ENCODE measurements at regions of chr4 and their contacts with region 1.

Region 1: DNA sequence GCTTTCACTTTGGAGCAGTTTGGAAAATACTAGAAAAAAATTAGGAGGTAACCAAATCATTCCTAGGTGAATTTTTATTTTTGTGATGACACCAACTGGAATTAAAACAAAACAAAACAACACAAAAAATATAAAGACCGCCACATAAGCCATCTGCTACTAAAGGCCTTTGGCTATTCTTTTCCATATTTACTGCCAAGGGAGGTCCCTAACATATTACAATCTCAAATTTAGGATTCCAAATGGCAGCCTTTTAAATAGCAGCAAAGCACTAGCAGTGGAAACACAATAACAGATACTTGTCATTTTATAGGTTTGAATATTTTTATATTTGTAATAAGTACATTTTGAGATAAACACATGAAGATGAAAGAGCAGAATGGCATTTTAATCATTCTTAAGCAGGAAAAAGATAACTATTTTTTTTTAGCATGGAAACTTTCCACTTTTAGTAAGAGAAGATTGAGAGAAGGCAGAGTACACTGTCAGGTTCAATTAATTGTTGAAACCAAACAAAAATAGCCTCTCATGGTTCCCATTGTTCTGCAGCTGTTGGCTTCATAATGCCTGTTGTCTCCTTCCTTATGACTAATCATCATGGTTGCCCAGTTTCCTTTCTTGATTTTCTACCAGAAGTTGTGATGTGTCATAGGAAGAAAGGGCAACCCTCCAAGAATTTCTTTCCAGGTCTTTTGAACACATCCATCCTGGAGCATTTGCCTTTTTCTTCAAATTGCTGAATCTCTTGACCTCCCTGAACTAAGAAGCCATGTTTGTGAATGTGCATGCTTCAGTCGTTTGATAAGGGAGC is 219.0 kb upstream of the EMCN start:
- DNase-seq: no peak

Region 2: DNA sequence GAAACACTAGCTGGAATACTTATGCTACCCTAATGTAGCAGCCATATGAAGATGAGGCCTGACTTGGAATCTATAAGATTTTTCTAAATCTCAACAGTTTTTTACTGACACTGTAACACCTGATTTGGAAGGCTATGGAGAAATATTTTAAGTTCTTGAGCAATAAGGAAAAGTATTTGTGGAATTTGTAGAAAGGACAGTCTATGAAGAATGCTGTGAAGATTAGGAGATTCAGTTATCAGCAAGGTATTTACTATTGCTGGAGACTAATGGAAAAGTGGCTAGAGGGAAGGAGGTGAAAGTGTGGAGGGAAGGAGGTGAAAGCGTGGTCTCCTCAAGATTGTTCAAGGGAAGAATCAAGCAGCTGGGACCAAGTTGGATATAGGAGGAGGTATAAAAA is 29.1 kb before region 1 on chr4:
- intact Hi-C with region 1: loop called in 1 of 2 experiments (anchors 1 kb)
- DNase-seq: no peak

Region 3: DNA sequence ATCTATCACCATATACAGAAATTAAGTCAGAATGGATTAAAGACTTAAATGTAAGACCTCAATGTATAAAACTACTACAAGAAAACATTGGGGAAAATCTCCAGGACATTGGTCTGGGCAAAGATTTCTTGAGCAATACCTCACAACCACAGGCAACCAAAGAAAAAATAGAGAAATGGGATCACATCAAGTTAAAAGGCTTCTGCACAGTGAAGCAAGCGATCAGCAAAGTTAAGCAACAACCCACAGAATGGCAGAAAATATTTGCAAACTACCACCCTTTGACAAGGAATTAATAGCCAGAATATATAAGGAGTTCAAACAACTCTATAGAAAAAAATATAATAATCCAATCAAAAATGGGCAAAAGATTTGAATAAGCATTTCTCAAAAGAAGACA is 17.9 kb after region 1 on chr4:
- intact Hi-C with region 1: no loop called
- DNase-seq: no peak

Measured in posterior vena cava (tissue), 2 donors.